ENCODE measurements at regions of chr7 and their contacts with region 1.

Region 1: DNA sequence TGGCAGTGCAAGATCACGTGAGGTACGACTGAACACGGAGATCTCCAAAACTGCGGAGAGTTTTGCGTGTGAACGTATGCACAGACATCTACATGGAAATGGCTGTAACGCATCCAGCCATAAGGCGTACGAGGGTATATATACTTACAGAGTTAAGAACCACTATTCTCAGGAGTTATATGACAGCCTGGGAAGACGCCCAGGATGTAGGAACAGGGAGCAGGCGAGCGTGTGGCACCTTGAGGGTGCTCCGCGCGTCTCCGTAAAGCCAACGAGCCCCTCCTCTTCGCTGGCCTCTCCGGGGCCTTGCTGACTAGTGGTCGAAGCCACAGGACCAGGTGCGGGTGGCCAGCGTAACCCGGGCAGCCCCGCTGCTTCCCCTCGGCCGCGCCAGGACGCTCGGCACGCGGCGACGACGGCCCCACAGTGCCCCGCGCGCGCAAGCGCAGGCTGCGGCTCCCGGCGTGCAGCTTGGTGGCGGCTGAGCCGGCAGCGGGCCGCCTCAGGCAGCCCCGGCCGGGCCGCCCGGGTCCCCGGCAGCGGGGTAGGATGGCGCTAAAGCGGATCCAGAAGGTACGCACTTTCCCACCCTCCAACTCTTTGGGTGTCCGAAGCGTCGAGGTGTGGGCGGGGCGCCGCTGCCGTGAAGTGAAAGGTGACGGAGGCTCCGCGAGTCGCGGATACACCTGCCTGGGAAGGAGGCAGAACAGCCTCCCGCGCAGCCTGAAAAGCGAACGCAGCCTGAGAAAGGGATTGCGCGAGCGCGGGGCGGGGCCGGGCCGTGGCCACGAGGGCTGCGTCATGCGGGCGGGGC is at the start of gene UBE2D4:
- DNase-seq: peak; percentile 83 to 93 (median 91)
- ATAC-seq: peak; percentile 93
- H3K4me3 ChIP-seq: peak within 1 kb of the TSS; percentile 73
- H3K4me3 Mint-ChIP-seq: peak within 1 kb of the TSS; percentile 90 to 95 (median 93)
- H3K27ac ChIP-seq: peak within 1 kb of the TSS; percentile 94
- H3K27ac Mint-ChIP-seq: peak within 1 kb of the TSS; percentile 92 to 98 (median 96)
- H3K4me1 ChIP-seq: peaks cover 6 to 16% of the 10 kb centered on the region in 2 donors
- H3K4me1 Mint-ChIP-seq: peaks cover 20 to 58% (median 40%) of the 10 kb centered on the region in 7 donors
- H3K27me3 ChIP-seq: no peaks in the 10 kb centered on the region
- H3K27me3 Mint-ChIP-seq: no peaks in the 10 kb centered on the region
- total RNA-seq, gene UBE2D4: 6.3 to 13.9 (median 9.6) TPM

Region 2: DNA sequence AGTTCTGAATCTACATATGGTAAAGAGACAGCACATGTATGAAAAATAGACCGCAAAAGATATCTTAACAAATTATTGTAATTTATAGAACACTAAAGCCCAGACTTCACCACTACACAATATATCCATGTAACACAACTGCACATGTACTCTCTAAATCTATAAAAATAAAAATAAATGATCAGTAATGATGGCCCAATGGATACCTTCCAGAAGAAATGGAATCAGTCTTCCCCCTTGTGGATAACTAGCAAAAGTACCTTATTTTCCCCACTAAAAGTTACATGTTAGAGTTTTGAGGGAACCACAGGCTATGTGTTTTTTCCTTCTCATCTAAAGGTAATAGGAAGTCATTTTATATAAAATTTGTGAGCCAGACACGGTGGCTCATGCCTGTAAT is 1040.1 kb before region 1 on chr7:
- CTCF ChIA-PET with region 1: no interaction called
- POLR2A ChIA-PET with region 1: no interaction called
- intact Hi-C with region 1: loop called in 1 of 2 experiments (anchors 1 kb)
- DNase-seq: no peak
- ATAC-seq: no peak
- H3K4me3 ChIP-seq: no peak overlapping the region
- H3K4me3 Mint-ChIP-seq: no peak overlapping the region
- H3K27ac ChIP-seq: no peak overlapping the region
- H3K27ac Mint-ChIP-seq: peak overlapping the region in 4 of 9 donors; percentile 27 to 96 (median 54)
- H3K4me1 ChIP-seq: no peaks in the 10 kb centered on the region
- H3K4me1 Mint-ChIP-seq: peaks cover 18 to 34% (median 25%) of the 10 kb centered on the region in 7 donors
- H3K27me3 ChIP-seq: no peaks in the 10 kb centered on the region
- H3K27me3 Mint-ChIP-seq: peaks cover 0 to 3% (median 0%) of the 10 kb centered on the region in 5 donors

Region 3: DNA sequence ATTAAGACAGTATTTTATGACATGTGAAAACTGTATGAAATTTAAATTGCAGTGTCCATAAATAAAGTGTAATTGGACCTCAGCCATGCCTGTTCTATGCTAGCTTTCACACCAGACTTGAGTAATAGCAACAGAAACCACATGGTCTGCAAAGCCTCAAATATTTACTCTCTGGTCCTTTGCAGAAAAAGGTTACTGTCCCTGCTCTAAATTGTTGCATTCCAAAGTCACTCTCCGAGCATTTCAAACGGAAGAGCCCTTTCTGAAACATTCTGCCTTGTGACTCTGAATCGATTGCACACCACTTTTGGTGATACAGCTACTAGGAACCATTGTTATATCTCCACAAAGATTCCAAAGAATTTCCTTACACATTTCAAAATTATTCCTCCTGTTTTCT is 424.3 kb before region 1 on chr7:
- CTCF ChIA-PET with region 1: no interaction called
- POLR2A ChIA-PET with region 1: no interaction called
- intact Hi-C with region 1: no loop called
- DNase-seq: no peak
- ATAC-seq: no peak
- H3K4me3 ChIP-seq: no peak overlapping the region
- H3K4me3 Mint-ChIP-seq: no peak overlapping the region
- H3K27ac ChIP-seq: no peak overlapping the region
- H3K27ac Mint-ChIP-seq: no peak overlapping the region
- H3K4me1 ChIP-seq: no peaks in the 10 kb centered on the region
- H3K4me1 Mint-ChIP-seq: no peaks in the 10 kb centered on the region
- H3K27me3 ChIP-seq: no peaks in the 10 kb centered on the region
- H3K27me3 Mint-ChIP-seq: peaks cover 6 to 18% (median 9%) of the 10 kb centered on the region in 5 donors

Region 4: GRCh38 chr7:43612599-43613589 is 313.3 kb before region 1 on chr7:
- CTCF ChIA-PET with region 1: no interaction called
- POLR2A ChIA-PET with region 1: no interaction called
- intact Hi-C with region 1: no loop called
- DNase-seq: no peak
- ATAC-seq: peak; percentile 30
- H3K4me3 ChIP-seq: no peak overlapping the region
- H3K4me3 Mint-ChIP-seq: peak overlapping the region; percentile 36 to 71 (median 52)
- H3K27ac ChIP-seq: peak overlapping the region; percentile 49
- H3K27ac Mint-ChIP-seq: peak overlapping the region in 8 of 9 donors; percentile 68 to 91 (median 78)
- H3K4me1 ChIP-seq: peaks cover 64 to 74% of the 10 kb centered on the region in 2 donors
- H3K4me1 Mint-ChIP-seq: peaks cover 44 to 77% (median 58%) of the 10 kb centered on the region in 7 donors
- H3K27me3 ChIP-seq: no peaks in the 10 kb centered on the region
- H3K27me3 Mint-ChIP-seq: no peaks in the 10 kb centered on the region

Region 5: DNA sequence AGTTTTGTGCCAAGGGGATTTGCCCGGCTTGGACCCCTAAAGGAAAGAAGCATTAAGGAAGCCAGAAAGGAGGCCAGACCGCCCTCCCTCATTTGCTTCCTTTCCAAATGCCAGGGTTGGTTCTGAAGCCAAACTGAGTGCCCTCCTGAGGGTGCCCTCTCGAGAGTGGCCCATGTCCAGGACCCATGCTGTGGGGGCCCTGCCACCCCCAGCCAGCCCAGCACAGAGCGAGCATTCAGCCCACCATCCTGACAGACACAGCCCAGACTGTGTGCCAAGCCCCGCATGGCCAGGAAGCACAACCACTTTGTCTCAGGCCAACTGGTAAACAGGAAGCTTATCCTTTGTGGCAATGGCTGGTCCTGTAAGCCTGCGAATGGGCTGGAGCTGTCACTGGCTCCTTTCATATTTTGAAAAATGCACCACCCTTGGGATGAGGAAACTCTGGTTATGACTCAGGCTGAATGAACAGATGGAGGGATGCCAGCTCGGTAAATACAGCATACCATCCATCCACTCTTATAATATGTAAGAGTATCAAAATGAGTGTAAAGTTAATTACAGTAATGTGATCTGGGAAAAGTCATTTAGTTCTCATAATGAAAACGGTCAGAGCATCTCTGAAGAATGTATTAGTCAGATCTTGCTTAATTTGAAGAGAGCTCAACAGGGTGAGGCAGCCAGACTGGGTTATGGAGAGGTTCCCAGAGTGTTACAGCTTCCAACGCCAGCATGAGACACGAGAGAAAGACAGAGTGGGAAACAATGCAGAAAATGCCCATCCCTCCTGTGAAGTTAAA is 278.3 kb before region 1 on chr7:
- CTCF ChIA-PET with region 1: no interaction called
- POLR2A ChIA-PET with region 1: no interaction called
- intact Hi-C with region 1: loop called in 1 of 2 experiments (anchors 10 kb)
- DNase-seq: peak in 3 of 9 donors; percentile 34 to 53 (median 50)
- ATAC-seq: peak; percentile 2
- H3K4me3 ChIP-seq: peak overlapping the region; percentile 22
- H3K4me3 Mint-ChIP-seq: peak overlapping the region; percentile 78 to 91 (median 83)
- H3K27ac ChIP-seq: peak overlapping the region; percentile 80
- H3K27ac Mint-ChIP-seq: peak overlapping the region in 8 of 9 donors; percentile 90 to 100 (median 98)
- H3K4me1 ChIP-seq: peaks cover 88 to 89% of the 10 kb centered on the region in 2 donors
- H3K4me1 Mint-ChIP-seq: peaks cover 78 to 98% (median 95%) of the 10 kb centered on the region in 7 donors
- H3K27me3 ChIP-seq: no peaks in the 10 kb centered on the region
- H3K27me3 Mint-ChIP-seq: no peaks in the 10 kb centered on the region

Region 6: DNA sequence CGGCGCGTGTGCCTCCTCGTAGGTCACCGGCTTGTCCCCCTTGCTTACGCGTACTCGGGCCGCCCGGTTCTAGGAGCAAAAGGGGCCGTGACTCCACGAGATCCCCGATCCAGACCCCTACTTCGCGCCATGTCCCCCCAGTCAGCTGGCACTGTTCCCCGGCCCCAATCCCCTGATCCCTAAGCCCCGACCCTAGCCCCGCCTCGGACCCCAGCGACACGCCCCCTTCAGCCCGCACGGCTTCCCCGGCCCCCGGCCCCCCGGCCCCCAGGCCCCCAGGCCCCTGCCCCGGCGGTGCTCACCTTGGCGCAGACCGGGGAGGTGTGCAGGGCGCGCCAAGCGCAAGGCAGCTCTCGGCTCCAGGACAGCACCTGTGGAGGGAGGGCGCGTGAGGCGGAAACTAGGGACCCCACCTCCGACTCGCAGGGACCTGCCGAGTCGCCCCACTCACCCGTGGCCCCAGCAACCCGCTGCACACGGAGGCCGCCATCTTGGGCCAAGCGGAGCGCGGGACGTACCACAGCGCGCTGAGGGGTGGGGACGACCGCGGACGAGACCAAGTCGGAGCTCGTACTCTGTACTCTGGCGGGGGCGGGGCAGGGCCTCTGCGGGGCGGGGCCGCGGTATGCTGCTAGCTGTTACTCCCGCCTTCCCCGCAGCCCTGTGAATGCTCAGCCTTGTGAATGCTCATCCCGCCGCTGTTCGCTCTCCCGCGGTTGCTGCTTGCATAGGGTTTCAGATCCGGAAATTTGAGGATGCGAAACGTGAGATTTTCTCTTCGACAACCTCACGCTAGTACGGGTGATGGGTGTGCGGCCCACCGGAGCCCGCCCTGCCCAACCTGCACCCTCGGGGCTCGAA is 57.0 kb before region 1 on chr7 and contains the start of gene MRPS24:
- CTCF ChIA-PET with region 1: interaction called, 3 read pairs
- POLR2A ChIA-PET with region 1: interaction called, 14 read pairs
- intact Hi-C with region 1: loop called (anchors 1 kb)
- DNase-seq: peak; percentile 84 to 95 (median 92)
- ATAC-seq: peak; percentile 100
- H3K4me3 ChIP-seq: peak within 1 kb of the TSS; percentile 92
- H3K4me3 Mint-ChIP-seq: peak within 1 kb of the TSS; percentile 88 to 97 (median 95)
- H3K27ac ChIP-seq: peak within 1 kb of the TSS; percentile 78
- H3K27ac Mint-ChIP-seq: peak within 1 kb of the TSS; percentile 86 to 97 (median 90)
- H3K4me1 ChIP-seq: peaks cover 13 to 15% of the 10 kb centered on the region in 2 donors
- H3K4me1 Mint-ChIP-seq: peaks cover 0 to 24% (median 22%) of the 10 kb centered on the region in 7 donors
- H3K27me3 ChIP-seq: no peaks in the 10 kb centered on the region
- H3K27me3 Mint-ChIP-seq: no peaks in the 10 kb centered on the region
- total RNA-seq, gene MRPS24: 44.2 to 76.6 (median 62.3) TPM

Region 7: DNA sequence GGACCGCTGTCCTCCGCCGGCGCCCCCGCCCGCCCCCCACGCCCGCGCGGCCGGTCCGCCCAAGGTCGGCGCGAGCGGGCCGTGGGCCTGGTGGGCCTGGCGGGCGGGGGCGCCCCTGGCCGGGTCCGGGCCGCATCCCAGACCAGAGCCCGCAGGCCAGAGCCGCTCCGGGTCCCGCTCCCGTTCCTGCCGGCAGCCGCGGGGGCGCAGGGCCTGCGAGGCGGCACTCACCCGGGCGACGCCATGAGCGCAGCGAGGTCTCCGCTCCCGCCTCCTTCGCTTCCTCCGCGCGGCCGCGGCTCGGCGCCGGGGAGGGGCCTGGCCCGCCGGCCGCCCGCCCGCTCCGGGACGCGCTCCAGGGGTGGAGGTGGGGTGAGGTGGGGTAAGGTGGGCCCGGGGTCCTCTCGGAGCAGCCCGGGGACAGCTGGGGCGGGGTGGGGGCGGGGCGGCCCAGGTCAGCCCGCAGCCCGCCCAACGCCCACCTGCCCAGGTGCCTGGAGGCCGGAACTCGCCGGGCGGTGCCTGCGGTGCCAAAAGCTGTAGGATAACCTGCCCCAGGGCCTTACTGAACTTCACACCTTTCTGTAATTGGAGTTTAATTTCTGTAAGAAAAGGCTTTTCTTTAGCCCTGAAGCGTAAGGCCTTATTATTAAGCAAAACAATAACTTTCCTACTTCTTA is 19.7 kb before region 1 on chr7 and contains the start of gene URGCP:
- CTCF ChIA-PET with region 1: no interaction called
- POLR2A ChIA-PET with region 1: interaction called, 6 read pairs
- intact Hi-C with region 1: loop called (anchors 1 kb)
- DNase-seq: peak; percentile 37 to 70 (median 52)
- ATAC-seq: peak; percentile 92
- H3K4me3 ChIP-seq: peak within 1 kb of the TSS; percentile 74
- H3K4me3 Mint-ChIP-seq: peak within 1 kb of the TSS; percentile 91 to 97 (median 95)
- H3K27ac ChIP-seq: peak within 1 kb of the TSS; percentile 78
- H3K27ac Mint-ChIP-seq: peak within 1 kb of the TSS; percentile 92 to 97 (median 96)
- H3K4me1 ChIP-seq: peaks cover 18 to 22% of the 10 kb centered on the region in 2 donors
- H3K4me1 Mint-ChIP-seq: peaks cover 21 to 57% (median 40%) of the 10 kb centered on the region in 7 donors
- H3K27me3 ChIP-seq: no peaks in the 10 kb centered on the region
- H3K27me3 Mint-ChIP-seq: no peaks in the 10 kb centered on the region
- total RNA-seq, gene URGCP: 20.0 to 33.7 (median 26.8) TPM

Region 8: GRCh38 chr7:44748045-44748947 is 822.1 kb after region 1 on chr7 and contains the start of gene ZMIZ2:
- CTCF ChIA-PET with region 1: interaction called, 3 read pairs
- POLR2A ChIA-PET with region 1: no interaction called
- intact Hi-C with region 1: loop called in 1 of 2 experiments (anchors 1 kb)
- DNase-seq: peak; percentile 87 to 99 (median 93)
- ATAC-seq: peak; percentile 94
- H3K4me3 ChIP-seq: peak within 1 kb of the TSS; percentile 64
- H3K4me3 Mint-ChIP-seq: peak within 1 kb of the TSS; percentile 77 to 92 (median 88)
- H3K27ac ChIP-seq: peak within 1 kb of the TSS; percentile 98
- H3K27ac Mint-ChIP-seq: peak within 1 kb of the TSS; percentile 81 to 98 (median 92)
- H3K4me1 ChIP-seq: peaks cover 21 to 22% of the 10 kb centered on the region in 2 donors
- H3K4me1 Mint-ChIP-seq: peaks cover 22 to 63% (median 45%) of the 10 kb centered on the region in 7 donors
- H3K27me3 ChIP-seq: no peaks in the 10 kb centered on the region
- H3K27me3 Mint-ChIP-seq: no peaks in the 10 kb centered on the region
- total RNA-seq, gene ZMIZ2: 108 to 187 (median 144) TPM